WTC11 (cell line): ENCODE measurements at regions of chr17 and their contacts with region 1.

Region 1: DNA sequence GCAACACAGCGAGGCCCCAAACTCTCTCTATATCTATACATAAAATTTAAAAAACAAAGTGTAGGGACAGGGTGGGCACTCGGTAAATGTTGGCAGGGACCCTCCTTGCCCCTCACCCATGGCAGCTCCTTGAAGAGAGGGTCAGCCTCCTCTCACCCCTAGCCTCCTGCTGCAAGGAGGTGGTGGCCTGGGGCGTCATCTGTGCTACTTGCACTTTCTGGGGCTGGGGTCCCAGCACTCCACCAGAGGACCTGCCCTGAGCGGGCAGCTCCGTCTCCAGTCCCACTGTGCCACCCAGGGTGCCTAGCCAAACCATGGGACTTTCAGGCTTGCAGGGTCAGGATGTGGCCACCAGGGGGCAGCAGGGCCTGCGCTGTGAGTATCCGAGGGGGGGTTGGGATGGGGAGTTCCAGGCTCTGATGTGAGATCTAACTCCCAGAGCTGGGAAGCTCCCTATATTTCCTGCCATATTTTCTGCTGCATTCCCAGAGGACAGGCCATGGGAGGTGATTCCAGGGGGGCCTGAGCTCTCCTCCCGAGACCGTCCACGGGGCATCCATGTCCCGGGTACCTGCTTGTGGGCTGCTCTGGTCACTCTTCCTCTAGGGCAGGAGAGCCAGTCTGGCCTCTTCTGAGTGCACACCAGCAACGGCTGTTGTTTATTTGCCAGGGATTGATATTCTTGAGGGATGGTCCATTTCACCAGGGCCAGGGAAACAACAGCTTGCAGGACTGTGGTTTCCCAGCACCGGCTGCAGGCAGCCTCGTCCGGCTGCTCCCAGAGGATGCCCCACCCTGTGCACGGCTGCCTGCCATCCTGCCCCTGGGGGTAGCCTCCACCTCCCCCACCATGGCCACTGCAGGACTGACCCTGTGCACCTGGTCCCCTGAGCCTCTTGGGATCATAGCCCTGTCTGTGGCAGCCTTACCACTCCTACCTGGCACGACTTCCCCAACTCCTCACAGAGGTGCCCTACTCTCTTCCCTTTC is 1.1 kb downstream of the GPR142 start:
- DNase-seq: peak; percentile 79
- ATAC-seq: peak; percentile 81
- H3K4me3 Mint-ChIP-seq: no peak overlapping the region
- H3K27ac Mint-ChIP-seq: no peak overlapping the region
- H3K4me1 Mint-ChIP-seq: peaks cover 9% of the 10 kb centered on the region
- H3K27me3 Mint-ChIP-seq: peaks cover 2% of the 10 kb centered on the region; the same call in 1 of the 2 replicates
- CTCF ChIP-seq: peak; percentile 95

Region 2: GRCh38 chr17:74305865-74306654 is 62.3 kb before region 1 on chr17:
- CTCF ChIA-PET with region 1: interaction called, 41 read pairs
- POLR2A ChIA-PET with region 1: no interaction called
- DNase-seq: no peak
- ATAC-seq: no peak
- H3K4me3 Mint-ChIP-seq: no peak overlapping the region
- H3K27ac Mint-ChIP-seq: no peak overlapping the region
- H3K4me1 Mint-ChIP-seq: no peaks in the 10 kb centered on the region
- H3K27me3 Mint-ChIP-seq: no peaks in the 10 kb centered on the region
- CTCF ChIP-seq: no peak

Region 3: GRCh38 chr17:74387365-74388218 is 19.2 kb after region 1 on chr17:
- CTCF ChIA-PET with region 1: interaction called, 12 read pairs
- POLR2A ChIA-PET with region 1: no interaction called
- DNase-seq: no peak
- ATAC-seq: peak; percentile 68
- H3K4me3 Mint-ChIP-seq: no peak overlapping the region
- H3K27ac Mint-ChIP-seq: no peak overlapping the region
- H3K4me1 Mint-ChIP-seq: peaks cover 21% of the 10 kb centered on the region
- H3K27me3 Mint-ChIP-seq: peaks cover 7% of the 10 kb centered on the region
- CTCF ChIP-seq: no peak

Region 4: GRCh38 chr17:74442670-74443515 is 74.5 kb after region 1 on chr17:
- CTCF ChIA-PET with region 1: interaction called, 24 read pairs
- POLR2A ChIA-PET with region 1: no interaction called
- DNase-seq: peak; percentile 66
- ATAC-seq: peak; percentile 80
- H3K4me3 Mint-ChIP-seq: peak overlapping the region; percentile 20
- H3K27ac Mint-ChIP-seq: no peak overlapping the region
- H3K4me1 Mint-ChIP-seq: peaks cover 25% of the 10 kb centered on the region
- H3K27me3 Mint-ChIP-seq: no peaks in the 10 kb centered on the region
- CTCF ChIP-seq: no peak

Region 5: GRCh38 chr17:74499992-74500391 is 131.6 kb after region 1 on chr17:
- CTCF ChIA-PET with region 1: interaction called, 26 read pairs
- POLR2A ChIA-PET with region 1: no interaction called
- DNase-seq: no peak
- ATAC-seq: no peak
- H3K4me3 Mint-ChIP-seq: no peak overlapping the region
- H3K27ac Mint-ChIP-seq: no peak overlapping the region
- H3K4me1 Mint-ChIP-seq: no peaks in the 10 kb centered on the region
- H3K27me3 Mint-ChIP-seq: no peaks in the 10 kb centered on the region; the same call in 1 of the 2 replicates
- CTCF ChIP-seq: no peak

Region 6: DNA sequence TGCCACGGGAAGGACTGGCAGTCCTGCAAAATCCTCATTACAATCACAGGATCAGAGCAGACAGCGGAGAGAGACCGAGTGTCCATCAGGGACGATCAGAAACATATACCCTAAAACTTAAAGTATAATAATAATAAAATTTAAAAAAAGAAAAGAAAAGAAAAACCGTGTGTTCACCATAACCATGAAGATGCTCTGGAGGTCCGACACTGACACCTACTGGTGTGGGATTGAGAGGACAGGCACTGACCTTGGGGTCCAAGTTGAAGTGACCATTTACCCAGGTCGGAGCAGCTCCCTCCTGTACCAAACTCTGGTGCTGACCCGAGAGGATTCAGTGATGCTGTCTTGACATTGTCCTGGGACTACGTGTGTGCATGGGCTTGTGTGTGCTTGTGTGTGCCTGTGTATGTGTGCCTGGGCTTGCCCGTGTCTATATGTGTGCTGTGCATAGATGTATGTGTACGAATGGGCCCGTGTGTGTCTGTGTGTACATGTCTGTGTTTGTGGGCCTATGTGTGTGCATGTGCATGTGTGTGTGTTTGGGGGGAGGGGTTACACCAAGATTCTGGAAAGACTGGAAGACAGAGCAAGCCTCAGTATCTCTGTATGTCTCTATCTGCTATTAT is 233.7 kb after region 1 on chr17:
- CTCF ChIA-PET with region 1: interaction called, 12 read pairs
- POLR2A ChIA-PET with region 1: no interaction called
- DNase-seq: peak; percentile 61
- ATAC-seq: peak; percentile 79
- H3K4me3 Mint-ChIP-seq: no peak overlapping the region
- H3K27ac Mint-ChIP-seq: no peak overlapping the region
- H3K4me1 Mint-ChIP-seq: peaks cover 7% of the 10 kb centered on the region
- H3K27me3 Mint-ChIP-seq: peaks cover 6% of the 10 kb centered on the region
- CTCF ChIP-seq: peak; percentile 48